HEK293 (cell line): ENCODE measurements at regions of chr18 and their contacts with region 1.

Region 1: DNA sequence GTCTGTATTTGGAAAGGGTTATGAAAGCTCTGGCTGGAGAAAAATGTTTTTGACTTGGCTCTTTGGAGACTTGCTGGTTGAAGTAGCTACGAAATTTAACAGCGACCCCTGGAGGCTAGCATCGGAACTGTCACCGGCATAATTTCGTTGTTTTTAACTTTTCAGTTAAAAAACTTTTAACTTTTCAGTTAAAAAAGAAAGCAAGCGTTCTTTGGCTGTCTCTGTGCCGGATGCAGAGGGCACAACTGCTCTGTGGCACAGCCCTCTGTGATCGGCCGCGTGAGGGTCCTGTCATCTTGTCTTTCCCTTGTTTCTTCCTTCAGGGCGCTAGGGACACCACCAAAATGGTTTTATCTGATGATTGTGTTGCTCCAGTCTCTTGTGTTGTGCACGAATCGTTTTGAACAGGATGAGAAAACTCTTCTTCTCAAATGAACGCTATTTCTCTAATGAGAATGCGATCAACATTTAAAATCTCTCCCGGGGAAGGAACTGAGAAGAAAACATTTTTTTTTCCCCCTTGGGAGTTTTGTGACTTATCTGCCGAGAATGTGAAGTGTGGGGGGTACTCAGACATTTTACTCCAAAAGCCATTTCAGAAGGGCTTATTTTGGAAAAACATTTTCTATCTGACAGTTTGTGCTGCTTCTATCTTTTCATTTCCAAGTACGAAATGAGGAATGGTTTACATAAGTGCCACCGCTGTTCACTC is 57.1 kb downstream of the ADCYAP1 start:
- H3K4me3 ChIP-seq: no peak overlapping the region; the same call in 1 of the 2 replicates
- H3K27ac ChIP-seq: no peak overlapping the region
- H3K4me1 ChIP-seq: no peaks in the 10 kb centered on the region
- CTCF ChIP-seq: peak; percentile 51

Region 2: DNA sequence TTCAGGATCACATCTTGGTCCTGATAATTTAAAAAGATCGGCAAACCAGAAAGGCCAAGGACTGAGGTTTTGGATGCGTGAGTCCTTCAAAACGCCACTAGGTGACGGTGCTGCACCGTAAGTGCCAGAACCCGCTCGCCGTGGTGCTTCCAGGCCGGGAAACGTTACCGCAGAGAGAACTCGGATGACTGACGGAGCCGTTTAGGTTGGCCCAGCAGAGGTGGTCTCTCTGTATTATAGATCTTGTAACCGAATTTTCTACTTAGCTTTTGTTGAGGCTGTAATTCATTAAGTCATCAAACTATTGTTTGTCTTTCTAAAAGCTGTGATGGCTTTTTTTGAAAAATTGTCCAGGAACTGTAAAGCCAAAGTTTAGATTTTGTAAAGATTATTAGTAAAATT is 96.9 kb before region 1 on chr18:
- CTCF ChIA-PET with region 1: interaction called, 16 read pairs
- POLR2A ChIA-PET with region 1: no interaction called
- H3K4me3 ChIP-seq: no peak overlapping the region
- H3K27ac ChIP-seq: no peak overlapping the region
- H3K4me1 ChIP-seq: no peaks in the 10 kb centered on the region
- CTCF ChIP-seq: peak; percentile 92

Region 3: GRCh38 chr18:875912-876311 is 85.9 kb before region 1 on chr18:
- CTCF ChIA-PET with region 1: interaction called, 11 read pairs
- POLR2A ChIA-PET with region 1: no interaction called
- H3K4me3 ChIP-seq: no peak overlapping the region
- H3K27ac ChIP-seq: no peak overlapping the region
- H3K4me1 ChIP-seq: no peaks in the 10 kb centered on the region
- CTCF ChIP-seq: no peak

Region 4: GRCh38 chr18:903701-904100 is 58.1 kb before region 1 on chr18:
- CTCF ChIA-PET with region 1: interaction called, 11 read pairs
- POLR2A ChIA-PET with region 1: no interaction called
- H3K4me3 ChIP-seq: no peak overlapping the region
- H3K27ac ChIP-seq: no peak overlapping the region
- H3K4me1 ChIP-seq: peaks cover 15% of the 10 kb centered on the region; the same call in 1 of the 2 replicates
- CTCF ChIP-seq: no peak

Region 5: GRCh38 chr18:944440-944839 is 17.4 kb before region 1 on chr18:
- CTCF ChIA-PET with region 1: interaction called, 18 read pairs
- POLR2A ChIA-PET with region 1: no interaction called
- H3K4me3 ChIP-seq: no peak overlapping the region
- H3K27ac ChIP-seq: no peak overlapping the region
- H3K4me1 ChIP-seq: no peaks in the 10 kb centered on the region
- CTCF ChIP-seq: no peak

Region 6: DNA sequence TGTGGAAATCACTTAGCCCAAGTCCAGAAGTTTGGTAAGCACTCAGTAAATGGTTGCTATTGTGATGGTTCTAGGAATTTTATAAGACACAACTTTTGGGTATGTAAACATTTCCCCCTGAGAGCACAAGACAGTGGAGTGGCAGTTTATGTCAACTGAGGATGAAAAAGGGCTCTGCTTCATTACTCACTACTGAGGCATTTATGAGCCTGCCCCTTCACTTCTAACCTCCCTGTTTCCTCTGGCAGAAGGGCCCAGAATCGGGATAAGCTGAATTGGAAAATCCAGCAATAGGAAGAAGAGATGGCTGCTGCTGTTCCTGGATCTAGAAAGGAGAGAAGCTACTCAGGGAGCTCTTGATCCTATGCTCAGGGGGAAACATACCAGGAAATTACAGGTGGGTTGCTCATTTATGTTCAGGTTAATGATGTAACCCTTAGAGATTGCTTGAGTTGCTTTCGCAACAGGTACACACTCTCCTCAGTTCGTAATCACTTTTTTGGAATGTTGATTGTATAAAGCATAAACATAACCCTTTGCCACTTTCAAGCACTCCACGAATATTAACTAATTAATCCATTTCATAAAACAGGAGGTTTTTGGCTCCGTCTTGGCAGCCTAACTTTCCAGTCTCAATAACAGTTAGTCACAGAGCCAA is 10.8 kb before region 1 on chr18:
- CTCF ChIA-PET with region 1: interaction called, 13 read pairs
- POLR2A ChIA-PET with region 1: no interaction called
- H3K4me3 ChIP-seq: no peak overlapping the region
- H3K27ac ChIP-seq: no peak overlapping the region
- H3K4me1 ChIP-seq: no peaks in the 10 kb centered on the region
- CTCF ChIP-seq: no peak

Region 7: GRCh38 chr18:998937-999336 is 37.1 kb after region 1 on chr18:
- CTCF ChIA-PET with region 1: interaction called, 18 read pairs
- POLR2A ChIA-PET with region 1: no interaction called
- H3K4me3 ChIP-seq: no peak overlapping the region
- H3K27ac ChIP-seq: no peak overlapping the region
- H3K4me1 ChIP-seq: no peaks in the 10 kb centered on the region
- CTCF ChIP-seq: no peak